ENCODE measurements at regions of chr2 and their contacts with region 1.

Region 1: GRCh38 chr2:38465789-38466127 is 88.7 kb upstream of the ATL2 start:
- DNase-seq: peak; percentile 63
- ATAC-seq: no peak
- H3K4me3 ChIP-seq: no peak overlapping the region
- H3K27ac ChIP-seq: no peak overlapping the region
- H3K4me1 ChIP-seq: peaks cover 33% of the 10 kb centered on the region
- H3K27me3 ChIP-seq: no peaks in the 10 kb centered on the region
- CTCF ChIP-seq: peak; percentile 81

Region 2: GRCh38 chr2:38293152-38293865 is 172.4 kb before region 1 on chr2:
- CTCF ChIA-PET with region 1: no interaction called
- POLR2A ChIA-PET with region 1: no interaction called
- intact Hi-C with region 1: no loop called
- DNase-seq: no peak
- ATAC-seq: no peak
- H3K4me3 ChIP-seq: no peak overlapping the region
- H3K27ac ChIP-seq: no peak overlapping the region
- H3K4me1 ChIP-seq: no peaks in the 10 kb centered on the region
- H3K27me3 ChIP-seq: no peaks in the 10 kb centered on the region
- CTCF ChIP-seq: no peak

Region 3: GRCh38 chr2:38377050-38377828 is 88.5 kb before region 1 on chr2 and contains the start of gene ATL2:
- CTCF ChIA-PET with region 1: interaction called, 21 read pairs
- POLR2A ChIA-PET with region 1: no interaction called
- intact Hi-C with region 1: loop called (anchors 1 kb)
- DNase-seq: peak; percentile 93
- ATAC-seq: peak; percentile 74
- H3K4me3 ChIP-seq: peak within 1 kb of the TSS; percentile 74
- H3K27ac ChIP-seq: peak within 1 kb of the TSS; percentile 73
- H3K4me1 ChIP-seq: peaks cover 23% of the 10 kb centered on the region
- H3K27me3 ChIP-seq: no peaks in the 10 kb centered on the region
- CTCF ChIP-seq: no peak
- total RNA-seq, gene ATL2: 65.3 and 89.4 TPM in 2 replicates

Region 4: DNA sequence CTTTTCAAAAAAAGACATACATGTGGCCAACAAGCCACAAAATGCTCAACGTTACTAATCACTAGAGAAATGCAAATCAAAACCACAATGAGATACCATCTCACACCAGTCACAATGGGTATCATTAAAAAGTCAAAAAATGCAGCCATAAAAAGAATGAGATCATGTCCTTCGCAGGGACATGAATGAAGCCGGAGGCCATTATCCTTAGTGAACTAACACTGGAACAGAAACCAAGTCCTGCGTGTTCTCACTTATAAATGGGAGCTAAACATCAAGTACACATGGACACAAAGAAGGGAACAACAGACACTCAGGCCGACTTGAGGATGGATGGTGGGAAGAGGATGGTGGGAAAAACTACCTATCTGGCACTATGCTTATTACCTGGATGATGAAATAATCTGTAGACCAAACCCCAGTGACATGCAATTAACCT is 70.8 kb before region 1 on chr2:
- CTCF ChIA-PET with region 1: interaction called, 3 read pairs
- POLR2A ChIA-PET with region 1: interaction called, 4 read pairs
- intact Hi-C with region 1: loop called (anchors 1 kb)
- DNase-seq: peak; percentile 86
- ATAC-seq: peak; percentile 52
- H3K4me3 ChIP-seq: no peak overlapping the region
- H3K27ac ChIP-seq: peak overlapping the region; percentile 90
- H3K4me1 ChIP-seq: peaks cover 27% of the 10 kb centered on the region
- H3K27me3 ChIP-seq: no peaks in the 10 kb centered on the region
- CTCF ChIP-seq: no peak

Region 5: DNA sequence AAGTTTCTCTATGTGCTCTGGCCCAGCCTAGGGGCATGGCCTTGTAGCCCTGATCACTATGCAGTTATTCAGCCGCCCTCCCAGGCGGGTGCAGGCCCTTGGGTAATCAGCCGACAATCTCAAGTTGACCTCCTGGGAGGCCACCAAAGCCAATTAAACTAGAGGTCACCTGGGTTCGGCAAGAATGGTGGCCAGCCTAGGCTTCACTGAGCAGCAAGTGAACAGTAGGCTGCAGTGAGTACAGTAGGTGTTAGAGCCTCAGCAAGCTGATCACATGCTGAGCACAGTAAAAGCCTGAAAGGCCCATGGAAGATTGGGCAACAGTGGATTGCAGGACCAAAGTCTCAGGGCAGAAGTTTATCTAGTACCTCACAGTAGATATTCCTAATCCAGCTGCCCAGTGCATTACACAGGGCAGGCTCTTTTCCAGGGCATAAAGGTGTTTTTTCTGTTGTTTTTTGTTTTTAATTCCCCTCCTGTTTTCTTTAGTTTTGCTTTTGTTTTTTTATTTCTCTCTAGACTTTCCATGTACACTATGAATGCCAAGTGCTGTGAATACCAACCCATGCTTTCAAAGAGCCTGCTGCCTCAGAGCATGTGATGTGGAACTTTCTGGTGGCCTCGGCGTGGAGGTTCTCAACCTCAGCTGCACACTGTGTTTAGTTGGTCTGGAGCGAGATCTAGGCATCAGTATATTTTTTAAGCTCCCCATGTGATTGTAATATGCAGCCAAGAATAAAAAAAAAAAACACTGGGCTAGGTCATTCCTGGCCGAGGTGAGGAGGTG is 32.7 kb before region 1 on chr2:
- CTCF ChIA-PET with region 1: no interaction called
- POLR2A ChIA-PET with region 1: no interaction called
- intact Hi-C with region 1: loop called (anchors 2 kb)
- DNase-seq: no peak
- ATAC-seq: no peak; the same call in 1 of the 2 replicates
- H3K4me3 ChIP-seq: no peak overlapping the region
- H3K27ac ChIP-seq: peak overlapping the region; percentile 76
- H3K4me1 ChIP-seq: peaks cover 43% of the 10 kb centered on the region
- H3K27me3 ChIP-seq: no peaks in the 10 kb centered on the region
- CTCF ChIP-seq: no peak

Region 6: DNA sequence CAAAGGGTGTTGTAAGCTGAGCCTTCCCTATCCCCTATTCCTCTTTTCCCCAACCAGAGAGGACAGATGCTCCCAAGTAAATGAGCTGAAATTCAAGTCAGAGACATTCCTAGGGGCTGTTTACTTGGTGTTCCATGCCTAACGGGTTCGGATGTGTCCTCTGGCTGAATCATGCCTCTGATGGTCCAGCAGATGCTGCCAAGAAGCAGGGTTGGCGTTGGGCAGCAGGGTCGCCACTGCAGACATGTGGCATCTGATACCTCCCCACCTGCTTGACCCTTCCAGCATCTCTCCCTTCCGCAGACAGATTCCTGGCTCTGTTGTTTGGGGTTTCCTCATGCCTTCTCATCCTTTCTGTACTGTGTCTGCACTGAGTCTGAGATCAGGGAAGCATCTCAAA is 28.6 kb after region 1 on chr2:
- CTCF ChIA-PET with region 1: no interaction called
- POLR2A ChIA-PET with region 1: no interaction called
- intact Hi-C with region 1: no loop called
- DNase-seq: no peak
- ATAC-seq: no peak
- H3K4me3 ChIP-seq: no peak overlapping the region
- H3K27ac ChIP-seq: no peak overlapping the region
- H3K4me1 ChIP-seq: no peaks in the 10 kb centered on the region
- H3K27me3 ChIP-seq: no peaks in the 10 kb centered on the region
- CTCF ChIP-seq: no peak

Measured in PC-3 (cell line).